Psoas muscle (tissue), 8 donors: ENCODE measurements at regions of chr14 and their contacts with region 1.

Region 1: GRCh38 chr14:102316743-102317563 is 2.6 kb upstream of the ZNF839 start:
- DNase-seq: peak; percentile 91 to 96
- ATAC-seq: peak; percentile 72 to 76 (median 74)
- H3K4me3 ChIP-seq: peak overlapping the region; percentile 70
- H3K27ac ChIP-seq: peak overlapping the region; percentile 99
- H3K4me1 ChIP-seq: peaks cover 33% of the 10 kb centered on the region
- H3K27me3 ChIP-seq: no peaks in the 10 kb centered on the region
- CTCF ChIP-seq: peak; percentile 73

Region 2: GRCh38 chr14:102046343-102047278 is 270.3 kb before region 1 on chr14:
- intact Hi-C with region 1: loop called in 1 of 2 experiments (anchors 5 kb)
- DNase-seq: peak; percentile 88 to 96
- ATAC-seq: peak; percentile 83 to 89 (median 86)
- H3K4me3 ChIP-seq: no peak overlapping the region
- H3K27ac ChIP-seq: peak overlapping the region; percentile 77
- H3K4me1 ChIP-seq: peaks cover 41% of the 10 kb centered on the region
- H3K27me3 ChIP-seq: no peaks in the 10 kb centered on the region
- CTCF ChIP-seq: peak; percentile 59

Region 3: DNA sequence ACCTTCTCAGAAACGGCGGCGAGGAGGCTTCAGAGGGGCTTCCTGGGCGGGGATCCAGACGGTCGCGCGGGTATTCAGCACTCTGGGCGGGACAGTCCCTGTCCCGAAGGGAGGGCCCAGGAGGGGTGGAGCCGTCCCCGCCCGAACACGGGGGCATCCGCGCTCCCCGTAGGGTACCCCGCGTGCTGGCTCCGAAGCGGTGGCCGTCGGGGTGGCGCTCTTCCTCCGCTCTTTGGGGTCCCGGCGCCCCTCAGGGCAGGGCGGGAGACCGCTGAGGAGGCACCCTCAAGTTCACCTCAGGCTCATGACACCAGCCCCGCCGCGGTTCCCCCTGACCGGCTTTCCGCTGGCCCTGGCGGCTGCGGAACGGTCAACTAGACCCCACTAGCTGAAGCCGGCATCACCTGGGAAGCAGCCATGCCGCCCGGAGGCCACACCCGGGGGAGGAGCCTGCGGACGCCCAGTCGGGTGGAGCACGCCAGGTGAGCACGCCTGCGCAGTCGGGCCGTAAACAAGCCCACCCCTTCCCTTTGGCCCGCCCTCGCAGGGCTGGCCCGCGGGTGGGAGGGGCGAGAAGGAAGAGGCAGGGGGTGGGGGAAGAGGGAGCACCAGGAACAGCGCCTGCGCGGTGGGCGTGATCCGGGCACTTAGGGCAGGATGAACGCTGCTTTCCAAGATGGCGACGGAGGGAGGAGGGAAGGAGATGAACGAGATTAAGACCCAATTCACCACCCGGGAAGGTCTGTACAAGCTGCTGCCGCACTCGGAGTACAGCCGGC is 177.5 kb before region 1 on chr14 and contains the start of gene WDR20:
- intact Hi-C with region 1: loop called in 1 of 2 experiments (anchors 5 kb)
- DNase-seq: peak; percentile 98 to 99
- ATAC-seq: peak; percentile 99 to 100 (median 99)
- H3K4me3 ChIP-seq: peak within 1 kb of the TSS; percentile 86
- H3K27ac ChIP-seq: peak within 1 kb of the TSS; percentile 87
- H3K4me1 ChIP-seq: peaks cover 13% of the 10 kb centered on the region
- H3K27me3 ChIP-seq: no peaks in the 10 kb centered on the region
- CTCF ChIP-seq: no peak
- total RNA-seq, gene WDR20: 18.3 to 26.8 (median 22.3) TPM

Region 4: GRCh38 chr14:102362545-102363181 is 45.7 kb after region 1 on chr14 and contains the starts of genes CINP and TECPR2:
- intact Hi-C with region 1: loop called in 1 of 2 experiments (anchors 2 kb)
- DNase-seq: peak; percentile 99
- ATAC-seq: peak; percentile 96 to 98 (median 98)
- H3K4me3 ChIP-seq: peak within 1 kb of the TSS; percentile 88
- H3K27ac ChIP-seq: peak within 1 kb of the TSS; percentile 94
- H3K4me1 ChIP-seq: peaks cover 29% of the 10 kb centered on the region
- H3K27me3 ChIP-seq: no peaks in the 10 kb centered on the region
- CTCF ChIP-seq: no peak
- total RNA-seq, gene CINP: 27.8 to 40.1 (median 32.5) TPM
- total RNA-seq, gene TECPR2: 12.9 to 22.5 (median 18.4) TPM